HepG2 (cell line): ENCODE measurements at regions of chr12 and their contacts with region 1.

Region 1: GRCh38 chr12:106044773-106045172 is 94.0 kb downstream of the NUAK1 start:
- DNase-seq: no peak
- ATAC-seq: no peak
- H3K4me3 ChIP-seq: no peak overlapping the region
- H3K27ac ChIP-seq: no peak overlapping the region
- H3K4me1 ChIP-seq: no peaks in the 10 kb centered on the region
- H3K27me3 ChIP-seq: peaks cover 2 to 14% of the 10 kb centered on the region in 2 experiments; a peak in 3 of 5 replicates
- CTCF ChIP-seq: no peak
- EP300 ChIP-seq: no peak
- POLR2A ChIP-seq: no peak
- RAD21 ChIP-seq: no peak

Region 2: GRCh38 chr12:106074706-106075392 is 30.1 kb after region 1 on chr12:
- CTCF ChIA-PET with region 1: no interaction called
- POLR2A ChIA-PET with region 1: no interaction called
- in situ Hi-C with region 1: no loop called
- intact Hi-C with region 1: no loop called
- DNase-seq: no peak
- ATAC-seq: no peak
- H3K4me3 ChIP-seq: no peak overlapping the region
- H3K27ac ChIP-seq: no peak overlapping the region
- H3K4me1 ChIP-seq: no peaks in the 10 kb centered on the region
- H3K27me3 ChIP-seq: no peaks in the 10 kb centered on the region
- CTCF ChIP-seq: no peak
- EP300 ChIP-seq: no peak
- POLR2A ChIP-seq: no peak
- RAD21 ChIP-seq: no peak

Region 3: DNA sequence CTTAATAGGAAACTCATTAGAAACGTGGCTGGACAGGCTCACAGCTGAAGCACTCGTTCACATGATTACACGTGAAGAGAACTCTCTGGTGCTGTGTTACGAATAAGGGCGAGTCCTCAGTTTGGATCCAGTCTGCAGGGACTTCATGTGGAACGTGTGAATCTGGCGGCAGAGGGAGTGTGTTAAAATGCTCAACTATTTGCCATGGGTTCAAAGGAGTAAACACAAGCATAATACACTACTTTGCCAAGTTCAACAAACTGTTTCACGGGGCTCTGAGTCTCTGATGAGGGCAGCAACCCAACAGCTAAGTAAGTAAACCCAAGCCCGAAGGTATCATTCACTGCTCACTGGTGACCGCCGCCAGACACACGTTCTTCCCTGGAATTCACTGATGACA is 51.6 kb after region 1 on chr12:
- CTCF ChIA-PET with region 1: no interaction called
- POLR2A ChIA-PET with region 1: no interaction called
- in situ Hi-C with region 1: no loop called
- intact Hi-C with region 1: loop called (anchors 5 kb)
- DNase-seq: no peak
- ATAC-seq: no peak
- H3K4me3 ChIP-seq: no peak overlapping the region
- H3K27ac ChIP-seq: no peak overlapping the region
- H3K4me1 ChIP-seq: peaks cover 84% of the 10 kb centered on the region
- H3K27me3 ChIP-seq: no peaks in the 10 kb centered on the region
- CTCF ChIP-seq: no peak
- EP300 ChIP-seq: no peak
- POLR2A ChIP-seq: no peak
- RAD21 ChIP-seq: no peak